Dorsolateral prefrontal cortex (tissue), 120 donors: ENCODE measurements at regions of chr14 and their contacts with region 1.

Region 1: GRCh38 chr14:23910101-23910875 is 43.3 kb upstream of the DHRS4 start:
- DNase-seq: peak in 2 of 10 donors; percentile 16 to 34
- H3K4me3 ChIP-seq: no peak overlapping the region
- H3K27ac ChIP-seq: no peak overlapping the region
- H3K27me3 ChIP-seq: no peaks in the 10 kb centered on the region
- CTCF ChIP-seq: peak in 55 of 56 donors; percentile 24 to 69 (median 58)

Region 2: GRCh38 chr14:23727566-23728335 is 182.5 kb before region 1 on chr14:
- intact Hi-C with region 1: loop called in 1 of 2 experiments (anchors 10 kb)
- DNase-seq: no peak
- H3K4me3 ChIP-seq: no peak overlapping the region
- H3K27ac ChIP-seq: no peak overlapping the region
- H3K27me3 ChIP-seq: no peaks in the 10 kb centered on the region
- CTCF ChIP-seq: peak in 55 of 56 donors; percentile 10 to 64 (median 41)

Region 3: DNA sequence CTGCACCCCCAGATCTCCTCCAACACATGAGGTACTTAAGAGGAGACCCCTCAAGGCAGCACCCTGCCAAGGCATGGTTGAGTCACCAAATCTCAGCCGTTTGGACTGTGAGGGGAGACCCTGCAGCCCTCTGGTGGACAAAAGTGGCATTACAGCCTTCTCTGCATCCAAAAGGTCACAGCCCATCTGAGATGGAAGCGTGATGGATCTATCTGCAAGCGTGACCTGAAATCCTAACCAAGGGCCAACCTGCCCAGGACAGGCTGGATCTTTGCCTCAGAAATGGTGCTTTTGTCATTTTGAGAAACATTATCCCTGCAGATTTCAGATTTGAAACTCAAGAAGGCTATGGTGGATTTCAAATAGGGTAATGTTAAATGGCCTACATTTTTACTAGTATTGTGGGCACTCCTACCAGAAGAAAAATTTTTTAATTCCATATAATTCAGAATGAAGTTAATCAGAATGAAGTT is 19.6 kb after region 1 on chr14:
- intact Hi-C with region 1: no loop called
- DNase-seq: peak; percentile 63 to 89 (median 82)
- H3K4me3 ChIP-seq: peak overlapping the region in 44 of 59 donors; percentile 1 to 55 (median 30)
- H3K27ac ChIP-seq: peak overlapping the region in 10 of 59 donors; percentile 9 to 49 (median 35)
- H3K27me3 ChIP-seq: no peaks in the 10 kb centered on the region
- CTCF ChIP-seq: peak; percentile 87 to 99 (median 92)

Region 4: DNA sequence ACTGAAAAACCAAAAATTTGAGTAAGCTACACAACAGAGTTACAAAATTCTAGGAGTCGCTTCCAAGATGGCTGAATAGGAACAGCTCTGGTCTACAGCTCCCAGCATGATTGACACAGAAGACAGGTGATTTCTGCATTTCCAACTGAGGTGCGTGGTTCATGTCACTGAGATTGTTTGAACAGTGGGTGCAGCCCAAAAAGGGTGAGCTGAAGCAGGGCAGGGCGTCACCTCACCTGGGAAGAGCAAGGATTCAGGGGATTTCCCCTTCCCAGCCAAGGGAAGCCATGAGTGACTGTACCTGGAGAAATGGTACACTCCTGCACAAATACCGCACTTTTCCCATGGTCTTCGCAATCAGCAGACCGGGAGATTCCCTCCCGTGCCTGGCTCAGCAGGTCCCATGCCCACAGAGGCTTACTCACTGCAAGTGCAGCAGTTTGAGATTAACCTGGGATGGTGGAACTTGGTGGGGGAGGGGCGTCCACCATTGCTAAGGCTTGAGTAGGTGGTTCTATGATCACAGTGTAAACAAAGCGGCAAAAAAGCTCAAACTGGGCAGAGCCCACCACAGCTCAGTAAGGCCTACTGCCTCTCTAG is 32.2 kb after region 1 on chr14:
- intact Hi-C with region 1: no loop called
- DNase-seq: no peak
- H3K4me3 ChIP-seq: no peak overlapping the region
- H3K27ac ChIP-seq: no peak overlapping the region
- H3K27me3 ChIP-seq: no peaks in the 10 kb centered on the region
- CTCF ChIP-seq: no peak